ENCODE measurements at regions of chr18 and their contacts with region 1.

Region 1: DNA sequence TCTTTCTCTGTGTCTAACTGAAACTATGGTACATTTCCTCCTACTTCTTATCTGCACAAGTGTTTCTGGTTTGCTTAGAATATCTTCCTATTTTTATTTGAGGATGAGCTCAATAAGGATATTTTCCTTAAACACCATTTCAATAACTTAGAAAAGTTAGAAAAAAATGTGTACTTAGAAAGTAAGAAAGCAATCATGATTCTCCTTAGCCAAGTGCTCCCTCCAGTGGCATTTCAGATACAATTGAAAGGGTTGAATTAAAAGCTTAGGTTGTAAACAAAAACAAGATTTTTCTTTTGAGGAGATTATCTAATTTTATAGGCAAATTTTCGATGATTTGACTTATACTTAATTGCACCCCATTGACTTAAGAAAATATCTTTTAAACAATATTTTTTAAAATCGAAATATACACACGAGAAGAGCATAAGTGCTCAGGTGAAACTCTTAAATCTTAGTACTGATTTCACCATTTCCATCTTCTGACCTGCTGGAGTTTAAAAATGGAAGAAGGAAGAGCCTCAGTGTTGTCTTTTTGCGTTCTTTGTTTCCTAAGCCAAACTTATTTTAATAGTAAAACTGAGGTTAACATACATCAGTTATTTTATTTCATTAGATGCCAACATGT is 26.9 kb downstream of the C18orf63 start:
- DNase-seq: peak; percentile 26
- H3K4me3 ChIP-seq: no peak overlapping the region
- H3K27ac ChIP-seq: no peak overlapping the region
- H3K4me1 ChIP-seq: no peaks in the 10 kb centered on the region
- H3K27me3 ChIP-seq: no peaks in the 10 kb centered on the region
- CTCF ChIP-seq: peak; percentile 43 to 61

Region 2: GRCh38 chr18:74040459-74041332 is 301.8 kb before region 1 on chr18:
- CTCF ChIA-PET with region 1: no interaction called
- dilution Hi-C with region 1: no loop called
- in situ Hi-C with region 1: no loop called
- intact Hi-C with region 1: loop called (anchors 1 kb)
- DNase-seq: no peak
- H3K4me3 ChIP-seq: no peak overlapping the region
- H3K27ac ChIP-seq: no peak overlapping the region
- H3K4me1 ChIP-seq: no peaks in the 10 kb centered on the region
- H3K27me3 ChIP-seq: peaks cover 2% of the 10 kb centered on the region
- CTCF ChIP-seq: peak; percentile 75 to 82

Region 3: GRCh38 chr18:74242438-74243096 is 100.0 kb before region 1 on chr18:
- CTCF ChIA-PET with region 1: no interaction called
- dilution Hi-C with region 1: no loop called
- in situ Hi-C with region 1: no loop called
- intact Hi-C with region 1: no loop called
- DNase-seq: no peak
- H3K4me3 ChIP-seq: no peak overlapping the region
- H3K27ac ChIP-seq: no peak overlapping the region
- H3K4me1 ChIP-seq: no peaks in the 10 kb centered on the region
- H3K27me3 ChIP-seq: no peaks in the 10 kb centered on the region
- CTCF ChIP-seq: no peak

Measured in mammary epithelial cell (primary cell).